ENCODE measurements at regions of chr5 and their contacts with region 1.

Region 1: GRCh38 chr5:144390133-144390532 is 219.5 kb downstream of the KCTD16 start:
- DNase-seq: no peak
- ATAC-seq: no peak
- H3K4me3 ChIP-seq: no peak overlapping the region
- H3K27ac ChIP-seq: no peak overlapping the region
- H3K4me1 ChIP-seq: no peaks in the 10 kb centered on the region
- H3K27me3 ChIP-seq: no peaks in the 10 kb centered on the region
- CTCF ChIP-seq: no peak

Region 2: DNA sequence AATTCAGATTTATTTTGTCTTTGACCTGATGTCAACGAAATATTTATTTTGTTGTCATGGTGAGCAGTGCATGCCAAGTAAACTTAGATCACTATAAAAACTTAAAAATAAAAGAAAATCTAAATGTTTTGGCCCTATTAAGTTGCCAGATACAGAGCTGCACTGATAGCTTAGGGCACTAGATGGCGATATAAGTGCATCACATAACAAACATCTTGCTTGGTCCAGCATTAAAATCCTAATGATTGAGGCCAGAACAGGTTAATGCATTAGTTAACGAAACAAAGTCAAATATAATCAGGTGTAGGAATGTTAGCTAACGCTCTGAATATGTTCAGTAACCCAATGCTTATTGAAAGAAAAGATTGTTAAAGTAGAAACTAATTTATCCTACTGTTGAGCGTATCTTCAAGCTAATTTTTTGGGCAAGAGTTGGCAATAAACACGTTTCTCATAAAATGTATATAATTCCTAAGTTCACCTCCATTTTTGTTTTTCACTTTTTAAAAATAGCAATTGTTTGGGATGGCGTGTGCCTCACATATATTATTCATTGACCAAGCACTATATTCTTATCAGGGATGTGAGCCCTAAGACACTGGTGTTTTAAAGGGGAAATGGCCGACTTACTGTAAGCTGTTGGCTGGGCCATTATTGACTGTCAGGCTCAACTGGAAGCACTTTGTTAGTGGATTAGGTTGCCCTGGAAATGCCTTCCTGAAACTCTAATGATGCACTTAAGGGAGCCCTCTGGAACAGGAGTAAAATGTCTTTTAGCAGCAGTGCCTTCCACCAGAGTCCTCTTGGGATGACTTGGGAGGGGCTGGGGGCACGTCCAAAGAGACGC is 186.2 kb before region 1 on chr5:
- intact Hi-C with region 1: loop called in 1 of 2 experiments (anchors 10 kb)
- DNase-seq: no peak
- ATAC-seq: peak in 3 of 4 donors; percentile 37 to 87 (median 71)
- H3K4me3 ChIP-seq: no peak overlapping the region
- H3K27ac ChIP-seq: no peak overlapping the region
- H3K4me1 ChIP-seq: peaks cover 5% of the 10 kb centered on the region
- H3K27me3 ChIP-seq: peaks cover 0 to 20% (median 4%) of the 10 kb centered on the region in 3 donors
- CTCF ChIP-seq: peak; percentile 94